ENCODE measurements at regions of chr11 and their contacts with region 1.

Region 1: DNA sequence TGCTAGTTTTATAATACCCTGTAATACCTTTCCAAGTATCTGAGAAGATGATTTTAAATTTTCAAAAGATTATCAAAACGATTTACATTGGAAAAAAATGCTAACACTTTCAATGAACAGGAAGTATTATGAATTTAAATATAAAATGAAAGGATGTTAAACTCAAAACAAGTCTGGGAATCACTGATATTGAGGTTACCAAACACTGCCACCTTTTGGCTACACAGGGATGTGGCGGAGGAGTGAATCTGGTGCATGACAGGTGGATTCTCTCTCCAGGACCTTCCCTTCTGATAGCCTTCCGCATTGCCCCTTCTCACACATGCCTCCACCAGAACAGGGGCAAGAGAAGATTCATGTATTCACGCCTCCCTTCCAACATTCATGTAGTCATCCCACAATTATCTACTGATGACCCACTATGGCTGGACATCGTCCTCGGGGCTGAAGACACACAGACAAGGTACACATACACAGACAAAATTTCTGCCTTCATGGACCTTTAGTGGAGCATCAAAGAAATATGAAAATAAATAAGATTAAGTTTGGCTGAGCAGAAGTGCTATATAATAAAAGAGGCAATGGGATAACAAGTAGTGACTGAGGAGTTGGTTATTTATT is 34.7 kb downstream of the ATG16L2 start:
- DNase-seq: peak; percentile 22
- H3K4me3 ChIP-seq: no peak overlapping the region
- H3K27ac ChIP-seq: no peak overlapping the region
- H3K4me1 ChIP-seq: no peaks in the 10 kb centered on the region
- H3K27me3 ChIP-seq: no peaks in the 10 kb centered on the region
- CTCF ChIP-seq: peak; percentile 68 to 83

Region 2: GRCh38 chr11:72703267-72704008 is 145.5 kb before region 1 on chr11:
- CTCF ChIA-PET with region 1: no interaction called
- dilution Hi-C with region 1: no loop called
- in situ Hi-C with region 1: no loop called
- intact Hi-C with region 1: no loop called
- DNase-seq: no peak
- H3K4me3 ChIP-seq: no peak overlapping the region
- H3K27ac ChIP-seq: no peak overlapping the region
- H3K4me1 ChIP-seq: peaks cover 8% of the 10 kb centered on the region
- H3K27me3 ChIP-seq: no peaks in the 10 kb centered on the region
- CTCF ChIP-seq: no peak

Region 3: DNA sequence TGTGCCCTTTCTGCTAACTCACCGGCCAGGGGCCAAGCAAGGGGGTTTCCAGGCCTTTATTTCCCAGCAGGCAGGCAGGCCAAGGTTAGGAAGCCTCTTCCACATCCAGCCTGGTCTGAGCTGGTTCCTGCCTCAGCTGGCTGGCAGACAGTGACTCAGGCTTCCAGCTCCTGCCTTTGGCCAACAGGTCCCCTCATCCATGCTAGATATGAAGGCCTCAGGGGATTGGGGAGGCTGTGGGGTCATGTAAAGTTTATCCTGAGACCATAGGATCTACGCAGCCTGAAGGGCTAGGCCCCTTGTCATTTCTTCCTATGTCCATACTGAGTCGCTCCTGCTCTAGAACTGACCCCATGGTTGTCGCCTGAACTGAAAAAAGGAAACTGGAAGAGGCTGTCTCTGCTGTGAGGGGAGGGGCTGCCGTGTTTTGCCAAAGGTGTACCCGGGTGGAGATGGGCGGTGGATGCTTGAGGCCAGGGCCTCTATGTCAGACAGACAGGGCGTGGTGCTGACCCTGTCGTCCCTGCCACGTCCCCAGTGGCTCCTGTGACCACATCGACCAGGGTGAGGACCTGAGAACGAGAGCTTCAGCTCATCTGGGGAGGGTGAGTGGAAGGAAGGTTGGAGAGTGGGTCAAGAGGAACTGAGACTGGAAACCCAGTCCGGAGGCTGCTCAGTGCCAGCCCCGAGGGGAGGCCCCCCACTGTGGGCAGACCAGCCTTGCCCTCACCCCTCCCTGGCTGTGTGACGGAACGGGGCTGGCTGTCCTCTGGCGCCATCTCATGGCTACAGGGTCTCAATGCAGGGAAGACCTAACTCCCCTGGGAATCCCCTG is 440.1 kb after region 1 on chr11:
- CTCF ChIA-PET with region 1: interaction called, 11 read pairs
- dilution Hi-C with region 1: no loop called
- in situ Hi-C with region 1: no loop called
- intact Hi-C with region 1: no loop called
- DNase-seq: peak; percentile 87
- H3K4me3 ChIP-seq: no peak overlapping the region
- H3K27ac ChIP-seq: peak overlapping the region; percentile 30
- H3K4me1 ChIP-seq: peaks cover 15% of the 10 kb centered on the region
- H3K27me3 ChIP-seq: no peaks in the 10 kb centered on the region
- CTCF ChIP-seq: peak; percentile 81 to 98